PC-9 (cell line): ENCODE measurements at regions of chr2 and their contacts with region 1.

Region 1: GRCh38 chr2:10408649-10409579 is 39.2 kb downstream of the ODC1 start:
- DNase-seq: peak; percentile 86 to 88
- H3K4me3 ChIP-seq: peak overlapping the region; percentile 31; the same call in 1 of the 2 replicates
- H3K27ac ChIP-seq: peak overlapping the region; percentile 97
- H3K4me1 ChIP-seq: peaks cover 66% of the 10 kb centered on the region
- H3K27me3 ChIP-seq: no peaks in the 10 kb centered on the region
- CTCF ChIP-seq: peak; percentile 98

Region 2: GRCh38 chr2:9282128-9283112 is 1126.5 kb before region 1 on chr2:
- CTCF ChIA-PET with region 1: no interaction called
- POLR2A ChIA-PET with region 1: no interaction called
- intact Hi-C with region 1: no loop called
- DNase-seq: no peak
- H3K4me3 ChIP-seq: no peak overlapping the region
- H3K27ac ChIP-seq: no peak overlapping the region
- H3K4me1 ChIP-seq: peaks cover 37% of the 10 kb centered on the region
- H3K27me3 ChIP-seq: no peaks in the 10 kb centered on the region
- CTCF ChIP-seq: no peak

Region 3: DNA sequence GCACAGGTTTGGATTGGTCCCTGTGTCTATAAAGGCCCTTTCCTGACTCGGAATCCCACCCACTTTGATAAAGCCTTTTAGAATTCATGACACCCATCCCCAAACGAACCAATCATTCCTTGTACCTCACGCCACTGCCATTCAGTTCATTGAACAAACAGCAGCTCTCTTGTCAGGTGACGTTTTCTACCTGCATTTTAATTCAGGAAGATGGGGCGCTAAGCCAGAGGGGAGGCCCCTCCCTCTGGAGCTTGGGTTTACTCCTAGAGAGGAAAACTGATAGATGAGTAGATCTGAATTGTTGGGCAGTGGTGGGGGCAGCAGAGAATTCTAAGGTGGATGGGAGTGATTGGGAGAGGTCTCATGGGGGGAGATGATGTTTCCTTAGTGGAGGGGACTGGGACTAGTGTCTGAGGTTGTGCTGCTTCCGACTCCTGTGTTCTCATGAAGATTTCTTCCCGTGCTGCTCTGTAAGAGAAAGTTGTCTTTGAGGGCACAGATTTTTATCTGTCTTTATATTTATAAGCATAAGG is 276.8 kb before region 1 on chr2:
- CTCF ChIA-PET with region 1: interaction called, 11 read pairs
- POLR2A ChIA-PET with region 1: interaction called, 3 read pairs
- intact Hi-C with region 1: no loop called
- DNase-seq: no peak
- H3K4me3 ChIP-seq: no peak overlapping the region
- H3K27ac ChIP-seq: no peak overlapping the region
- H3K4me1 ChIP-seq: no peaks in the 10 kb centered on the region
- H3K27me3 ChIP-seq: no peaks in the 10 kb centered on the region
- CTCF ChIP-seq: no peak

Region 4: DNA sequence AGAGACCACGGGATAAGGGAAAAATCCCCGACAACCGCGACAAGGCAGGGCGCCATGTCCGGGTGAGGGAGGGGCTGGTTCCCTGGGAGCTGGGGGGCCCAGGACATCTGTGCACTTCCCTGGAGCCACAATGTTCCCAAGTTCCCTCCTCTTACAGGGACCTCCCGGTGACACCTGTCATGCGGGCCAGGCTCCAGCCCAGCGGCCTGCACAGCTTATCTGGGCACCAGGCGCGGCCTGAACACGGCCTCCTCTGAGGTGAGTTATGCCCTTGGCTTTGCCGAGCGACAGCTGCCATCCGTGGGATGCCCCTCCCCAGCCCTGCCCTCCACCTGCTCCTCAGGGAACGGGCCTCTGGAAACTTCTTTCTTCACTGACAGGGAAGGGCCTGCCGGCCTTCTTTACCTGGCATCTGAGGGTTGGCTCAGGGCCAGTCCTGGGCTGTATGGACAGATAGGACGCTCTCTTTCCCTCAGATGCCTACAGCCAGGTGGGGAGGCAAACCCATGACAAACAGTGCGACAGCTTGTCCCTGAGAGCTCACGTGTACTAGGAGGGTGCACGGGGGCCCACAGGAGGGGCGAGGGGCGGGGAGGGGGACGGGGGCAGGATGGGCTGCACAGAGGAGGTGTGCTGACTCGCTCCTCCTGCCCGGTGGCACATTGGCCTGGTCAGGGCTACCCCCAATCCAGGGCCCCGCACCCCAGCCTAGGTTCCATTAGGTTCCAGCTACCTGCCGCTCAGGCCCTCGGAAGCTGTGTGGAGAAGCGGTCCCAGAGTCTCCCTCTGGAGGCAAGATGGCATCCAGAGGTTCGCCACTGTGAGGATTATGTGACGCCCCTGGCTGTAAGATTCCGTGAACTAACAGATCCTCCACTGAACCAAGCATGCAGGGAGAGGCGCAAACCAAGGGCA is 141.1 kb before region 1 on chr2:
- CTCF ChIA-PET with region 1: interaction called, 4 read pairs
- POLR2A ChIA-PET with region 1: no interaction called
- intact Hi-C with region 1: loop called (anchors 1 kb)
- DNase-seq: no peak
- H3K4me3 ChIP-seq: no peak overlapping the region
- H3K27ac ChIP-seq: no peak overlapping the region
- H3K4me1 ChIP-seq: peaks cover 22% of the 10 kb centered on the region
- H3K27me3 ChIP-seq: no peaks in the 10 kb centered on the region
- CTCF ChIP-seq: no peak

Region 5: DNA sequence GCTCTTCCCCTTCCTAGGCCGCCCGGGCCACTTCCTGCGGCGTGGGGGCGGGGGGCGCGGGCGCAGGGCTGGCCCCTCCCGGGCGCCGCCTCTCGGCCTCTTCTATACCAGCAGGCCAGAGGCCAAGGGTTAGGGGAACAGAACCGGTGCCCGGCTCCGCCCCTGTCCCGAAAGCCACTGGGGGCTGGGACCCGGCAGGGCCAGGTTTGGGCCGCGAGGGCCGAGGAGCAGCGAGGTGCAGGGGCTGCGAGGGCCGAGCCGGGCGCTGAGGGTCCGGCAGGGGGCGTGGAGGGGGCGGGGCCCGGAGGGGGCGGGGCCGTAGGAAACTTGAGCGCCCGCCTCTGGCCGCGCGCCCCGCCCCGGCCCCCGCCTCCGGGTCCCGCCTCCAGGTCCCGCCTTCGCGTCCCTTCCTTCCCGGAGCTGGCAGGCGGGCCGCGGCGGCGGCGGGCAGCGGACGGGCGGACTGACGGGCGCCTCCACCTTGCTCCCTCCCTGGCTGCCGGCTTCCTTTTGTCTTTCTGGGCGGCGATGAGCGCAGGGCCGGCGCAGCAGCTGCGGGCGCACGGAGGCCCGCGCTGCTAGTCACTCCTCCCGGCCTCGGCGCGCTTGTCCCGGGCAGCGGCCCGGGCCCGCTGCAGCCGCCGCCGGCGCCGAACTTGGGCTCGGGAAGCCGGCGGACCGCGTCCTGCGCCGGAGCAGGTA is 106.3 kb before region 1 on chr2 and contains the start of gene HPCAL1:
- CTCF ChIA-PET with region 1: interaction called, 16 read pairs
- POLR2A ChIA-PET with region 1: no interaction called
- intact Hi-C with region 1: loop called (anchors 1 kb)
- DNase-seq: peak; percentile 85 to 96
- H3K4me3 ChIP-seq: peak within 1 kb of the TSS; percentile 92
- H3K27ac ChIP-seq: peak within 1 kb of the TSS; percentile 83
- H3K4me1 ChIP-seq: peaks cover 71% of the 10 kb centered on the region
- H3K27me3 ChIP-seq: no peaks in the 10 kb centered on the region
- CTCF ChIP-seq: peak; percentile 63
- total RNA-seq, gene HPCAL1: 91.1 and 105 TPM in 2 replicates

Region 6: DNA sequence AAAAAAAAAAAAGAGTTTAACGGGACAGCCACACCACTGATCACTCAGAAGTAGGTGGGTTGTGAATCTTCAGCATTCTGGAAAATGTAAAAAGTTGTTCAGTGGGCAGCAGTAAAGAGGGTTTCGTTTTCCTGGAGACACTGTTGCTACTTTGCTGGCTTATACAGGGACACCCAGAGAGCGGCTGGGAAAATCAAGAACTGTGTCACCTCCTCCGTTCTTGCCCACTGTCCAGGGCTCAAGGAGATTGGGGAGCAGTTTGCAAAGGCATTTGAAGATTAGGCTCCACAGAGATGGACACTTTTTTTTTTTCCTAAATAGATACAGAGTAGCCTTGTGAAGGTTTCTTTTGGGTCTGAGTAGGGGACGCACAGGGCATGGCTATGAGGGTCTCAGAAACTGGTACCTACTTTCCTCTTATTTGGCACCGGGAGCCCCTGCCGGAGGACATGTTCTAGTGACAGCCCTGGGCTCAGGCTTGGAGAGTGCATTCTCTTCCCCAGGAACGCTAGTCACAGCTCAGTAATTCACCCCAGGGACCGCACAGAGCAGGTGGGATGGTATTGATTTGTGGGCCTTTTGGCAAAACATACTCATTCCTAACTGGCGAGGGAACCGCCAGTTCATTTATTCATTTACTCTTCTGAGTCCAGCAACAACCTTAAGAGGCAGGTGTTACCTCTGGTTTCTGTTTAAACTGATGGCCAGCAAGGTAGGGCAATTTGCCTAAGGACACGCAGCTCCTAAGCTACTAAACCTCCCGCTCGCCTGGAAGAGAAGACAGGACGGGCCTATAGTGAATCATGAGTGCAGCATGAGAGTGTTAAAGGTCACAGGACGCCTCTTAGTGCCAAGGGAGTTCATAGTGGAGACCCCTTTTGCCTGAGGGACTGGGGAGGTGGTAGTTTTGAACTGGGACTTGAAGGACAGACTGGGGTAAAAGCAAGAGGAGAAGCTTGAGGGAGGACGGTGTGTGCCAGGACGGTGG is 53.1 kb before region 1 on chr2:
- CTCF ChIA-PET with region 1: no interaction called
- POLR2A ChIA-PET with region 1: no interaction called
- intact Hi-C with region 1: loop called (anchors 1 kb)
- DNase-seq: peak in 1 of 2 experiments; percentile 74
- H3K4me3 ChIP-seq: no peak overlapping the region
- H3K27ac ChIP-seq: peak overlapping the region; percentile 40
- H3K4me1 ChIP-seq: peaks cover 15% of the 10 kb centered on the region
- H3K27me3 ChIP-seq: no peaks in the 10 kb centered on the region
- CTCF ChIP-seq: no peak

Region 7: GRCh38 chr2:10385933-10386773 is 22.8 kb before region 1 on chr2:
- CTCF ChIA-PET with region 1: interaction called, 6 read pairs
- POLR2A ChIA-PET with region 1: no interaction called
- intact Hi-C with region 1: loop called (anchors 2 kb)
- DNase-seq: peak in 1 of 2 experiments; percentile 35
- H3K4me3 ChIP-seq: no peak overlapping the region
- H3K27ac ChIP-seq: peak overlapping the region; percentile 38; the same call in 1 of the 2 replicates
- H3K4me1 ChIP-seq: peaks cover 40% of the 10 kb centered on the region
- H3K27me3 ChIP-seq: no peaks in the 10 kb centered on the region
- CTCF ChIP-seq: no peak

Region 8: DNA sequence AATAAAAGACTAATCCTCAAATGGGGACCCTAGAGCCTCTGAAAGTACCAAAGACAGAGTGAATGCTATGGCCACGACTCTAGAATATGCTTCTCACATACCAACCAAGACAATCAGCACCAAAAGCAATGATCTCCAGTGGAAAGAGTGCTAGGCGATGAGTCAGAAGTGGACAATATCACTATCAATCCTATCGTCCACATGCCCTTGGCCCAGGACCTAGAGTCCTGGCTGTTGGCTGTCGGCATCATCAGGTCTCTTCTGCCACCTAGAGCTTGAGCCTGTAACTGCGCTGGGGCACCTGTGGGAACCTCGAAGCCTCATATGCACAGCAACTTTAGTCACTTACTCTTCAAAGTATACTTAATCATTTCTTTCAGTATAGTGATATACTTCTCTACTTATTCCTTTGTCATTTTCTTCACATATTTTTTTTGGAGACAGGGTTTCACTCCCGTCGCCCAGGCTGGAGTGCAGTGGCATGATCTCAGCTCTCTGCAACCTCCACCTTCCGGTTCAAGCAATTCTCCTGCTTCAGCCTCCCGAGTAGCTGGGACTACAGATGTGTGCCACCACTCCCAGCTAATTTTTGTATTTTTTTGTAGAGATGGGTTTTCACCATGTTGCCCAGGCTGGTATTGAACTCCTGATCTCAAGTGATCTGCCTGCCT is 251.1 kb after region 1 on chr2:
- CTCF ChIA-PET with region 1: interaction called, 6 read pairs
- POLR2A ChIA-PET with region 1: no interaction called
- intact Hi-C with region 1: loop called (anchors 1 kb)
- DNase-seq: peak; percentile 67 to 76
- H3K4me3 ChIP-seq: no peak overlapping the region
- H3K27ac ChIP-seq: no peak overlapping the region
- H3K4me1 ChIP-seq: peaks cover 24% of the 10 kb centered on the region
- H3K27me3 ChIP-seq: no peaks in the 10 kb centered on the region
- CTCF ChIP-seq: peak; percentile 84

Region 9: GRCh38 chr2:10817413-10817812 is 408.5 kb after region 1 on chr2:
- CTCF ChIA-PET with region 1: no interaction called
- POLR2A ChIA-PET with region 1: no interaction called
- intact Hi-C with region 1: no loop called
- DNase-seq: peak in 1 of 2 experiments; percentile 30
- H3K4me3 ChIP-seq: no peak overlapping the region
- H3K27ac ChIP-seq: no peak overlapping the region
- H3K4me1 ChIP-seq: no peaks in the 10 kb centered on the region
- H3K27me3 ChIP-seq: peaks cover 43% of the 10 kb centered on the region
- CTCF ChIP-seq: peak; percentile 53